ENCODE measurements at regions of chr15 and their contacts with region 1.

Region 1: GRCh38 chr15:82139823-82140268 is 94.0 kb upstream of the MEX3B start:
- DNase-seq: no peak
- H3K4me3 Mint-ChIP-seq: no peak overlapping the region
- H3K27ac Mint-ChIP-seq: no peak overlapping the region
- H3K4me1 Mint-ChIP-seq: no peaks in the 10 kb centered on the region
- H3K27me3 Mint-ChIP-seq: no peaks in the 10 kb centered on the region

Region 2: GRCh38 chr15:82128401-82129148 is 11.3 kb before region 1 on chr15:
- CTCF ChIA-PET with region 1: interaction called, 12 read pairs
- POLR2A ChIA-PET with region 1: no interaction called
- intact Hi-C with region 1: no loop called
- DNase-seq: no peak
- H3K4me3 Mint-ChIP-seq: no peak overlapping the region
- H3K27ac Mint-ChIP-seq: no peak overlapping the region
- H3K4me1 Mint-ChIP-seq: no peaks in the 10 kb centered on the region
- H3K27me3 Mint-ChIP-seq: no peaks in the 10 kb centered on the region

Measured in activated CD4-positive, alpha-beta memory T cell treated with anti-CD3 and anti-CD28 coated beads for 36 hours (primary cell).